Transverse colon (tissue), 4 donors: ENCODE measurements at regions of chrX and their contacts with region 1.

Region 1: GRCh38 chrX:114626323-114626722 is 42.4 kb downstream of the HTR2C start:
- DNase-seq: no peak
- H3K4me3 ChIP-seq: no peak overlapping the region
- H3K27ac ChIP-seq: no peak overlapping the region
- H3K4me1 ChIP-seq: no peaks in the 10 kb centered on the region
- H3K27me3 ChIP-seq: no peaks in the 10 kb centered on the region
- CTCF ChIP-seq: peak in 4 of 5 experiments; percentile 12 to 20 (median 15)
- EP300 ChIP-seq: no peak
- POLR2A ChIP-seq: no peak

Region 2: DNA sequence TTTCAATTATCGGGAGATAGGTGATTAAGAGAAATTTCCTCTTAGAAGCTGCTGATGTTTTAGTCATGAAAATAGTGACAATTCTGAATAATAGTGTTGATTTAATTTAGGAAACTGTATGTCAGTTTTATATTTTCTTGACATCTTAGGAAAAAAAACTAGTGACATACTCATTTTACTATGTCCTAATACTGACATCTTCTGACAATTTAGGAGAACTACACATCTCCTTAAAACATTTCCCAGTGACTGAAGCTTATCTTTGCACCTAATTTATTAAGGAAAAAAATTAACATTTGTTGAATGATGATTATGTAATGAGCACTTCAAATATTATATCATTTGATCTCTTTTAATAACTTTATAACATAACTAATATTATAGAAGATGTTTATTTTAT is 520.9 kb after region 1 on chrX:
- in situ Hi-C with region 1: loop called in 3 of 4 experiments (anchors 25 kb)
- intact Hi-C with region 1: no loop called
- DNase-seq: no peak
- H3K4me3 ChIP-seq: no peak overlapping the region
- H3K27ac ChIP-seq: no peak overlapping the region
- H3K4me1 ChIP-seq: no peaks in the 10 kb centered on the region
- H3K27me3 ChIP-seq: no peaks in the 10 kb centered on the region
- CTCF ChIP-seq: peak in 4 of 5 experiments; percentile 26 to 49 (median 32)
- EP300 ChIP-seq: no peak
- POLR2A ChIP-seq: no peak